ENCODE measurements at regions of chr5 and their contacts with region 1.

Region 1: DNA sequence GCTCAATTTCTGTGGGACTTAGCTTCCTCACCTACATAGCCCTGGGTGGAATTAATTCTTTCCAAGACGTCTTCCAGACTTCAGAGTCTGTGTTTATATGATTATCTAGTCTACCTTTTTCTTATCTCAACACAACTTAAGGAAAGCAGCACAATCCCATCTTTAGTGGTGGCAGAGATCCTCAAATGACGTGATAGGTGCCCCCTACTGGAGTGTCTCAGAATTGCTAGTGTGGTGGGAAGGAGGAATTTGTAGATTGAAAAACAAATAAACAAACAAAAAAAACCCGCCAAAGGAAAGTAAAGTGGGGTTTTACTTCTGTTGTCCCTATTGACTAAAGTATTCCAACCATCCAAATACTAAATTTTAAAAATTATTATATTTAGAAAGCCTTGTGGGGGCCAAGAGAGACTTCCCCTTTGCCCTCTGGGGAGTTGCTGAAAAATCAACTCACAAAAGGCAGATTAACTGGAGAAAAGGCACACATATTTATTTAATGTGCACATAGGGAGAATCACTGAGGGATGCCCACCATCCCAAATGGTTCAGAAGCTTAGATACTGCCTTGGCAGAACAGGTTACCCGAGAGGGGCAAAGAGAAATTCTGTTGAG is 283.3 kb downstream of the TMEM167A start:
- DNase-seq: peak; percentile 53
- H3K4me3 ChIP-seq: no peak overlapping the region
- H3K27ac ChIP-seq: no peak overlapping the region
- H3K4me1 ChIP-seq: no peaks in the 10 kb centered on the region
- H3K27me3 ChIP-seq: peaks cover 0 to 7% of the 10 kb centered on the region in 2 experiments
- CTCF ChIP-seq: peak; percentile 67 to 69
- POLR2A ChIP-seq: no peak

Region 2: GRCh38 chr5:82312373-82312856 is 481.5 kb before region 1 on chr5:
- CTCF ChIA-PET with region 1: interaction called, 3 read pairs
- POLR2A ChIA-PET with region 1: no interaction called
- dilution Hi-C with region 1: no loop called
- intact Hi-C with region 1: loop called (anchors 2 kb)
- DNase-seq: peak; percentile 63
- H3K4me3 ChIP-seq: no peak overlapping the region
- H3K27ac ChIP-seq: no peak overlapping the region
- H3K4me1 ChIP-seq: peaks cover 7% of the 10 kb centered on the region
- H3K27me3 ChIP-seq: peaks cover 3 to 4% of the 10 kb centered on the region in 2 experiments
- CTCF ChIP-seq: peak; percentile 77 to 90
- POLR2A ChIP-seq: no peak

Region 3: DNA sequence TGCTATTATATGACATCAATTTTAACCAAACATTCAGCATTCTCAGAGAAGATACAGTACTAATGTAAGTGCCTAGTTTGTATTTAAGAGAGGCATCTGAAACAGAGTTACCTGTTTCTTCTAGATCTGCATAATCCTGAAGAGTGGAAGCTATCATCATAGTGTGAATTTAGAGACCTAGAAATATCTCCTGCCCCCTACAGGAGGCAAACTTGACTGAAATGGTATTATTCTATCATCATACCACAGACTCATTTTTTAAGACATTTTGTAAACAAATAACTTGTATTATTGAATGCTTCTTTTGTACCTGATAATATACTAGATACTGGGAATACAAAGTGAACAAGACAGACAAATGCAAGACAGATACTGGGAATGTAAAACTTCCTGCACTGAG is 299.0 kb before region 1 on chr5:
- CTCF ChIA-PET with region 1: no interaction called
- POLR2A ChIA-PET with region 1: no interaction called
- dilution Hi-C with region 1: no loop called
- intact Hi-C with region 1: loop called (anchors 10 kb)
- DNase-seq: peak; percentile 30
- H3K4me3 ChIP-seq: no peak overlapping the region
- H3K27ac ChIP-seq: no peak overlapping the region
- H3K4me1 ChIP-seq: no peaks in the 10 kb centered on the region
- H3K27me3 ChIP-seq: peaks cover 0 to 2% of the 10 kb centered on the region in 2 experiments
- CTCF ChIP-seq: peak in 1 of 2 donors; percentile 6
- POLR2A ChIP-seq: no peak

Region 4: DNA sequence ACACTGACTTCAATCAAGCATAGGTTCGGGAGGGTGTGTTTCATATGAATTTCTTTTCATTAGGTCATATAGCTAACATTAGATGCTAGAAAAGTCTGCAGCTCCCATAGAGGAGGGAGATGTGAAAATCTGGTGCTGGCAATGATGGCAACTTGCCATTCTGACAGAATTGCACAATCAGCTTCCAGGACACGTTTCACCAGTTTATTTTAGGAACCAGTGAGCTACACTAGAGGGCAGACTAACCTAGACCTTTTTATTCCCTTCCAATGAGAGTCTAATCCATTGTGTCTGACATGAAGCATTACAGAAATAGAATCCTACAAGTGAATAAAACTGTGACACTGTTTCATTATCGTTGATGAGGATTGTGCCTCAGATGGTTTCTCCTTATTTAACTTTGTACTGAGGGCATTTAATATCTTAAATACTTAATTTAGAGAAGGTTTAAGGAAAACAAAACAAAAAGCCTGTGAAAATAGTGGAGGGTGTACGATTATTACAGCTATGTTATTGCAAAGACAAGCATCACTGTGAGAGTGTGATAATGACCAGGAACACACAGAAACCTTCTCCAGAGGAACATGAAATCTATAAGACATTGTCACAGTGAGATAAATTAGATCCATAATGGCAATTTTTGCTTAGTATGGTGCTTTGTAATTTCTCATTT is 152.4 kb before region 1 on chr5:
- CTCF ChIA-PET with region 1: interaction called, 6 read pairs
- POLR2A ChIA-PET with region 1: no interaction called
- dilution Hi-C with region 1: no loop called
- intact Hi-C with region 1: loop called (anchors 1 kb)
- DNase-seq: peak; percentile 81
- H3K4me3 ChIP-seq: no peak overlapping the region
- H3K27ac ChIP-seq: no peak overlapping the region
- H3K4me1 ChIP-seq: no peaks in the 10 kb centered on the region
- H3K27me3 ChIP-seq: peaks cover 2% of the 10 kb centered on the region in 2 experiments
- CTCF ChIP-seq: peak; percentile 39 to 56
- POLR2A ChIP-seq: no peak

Region 5: DNA sequence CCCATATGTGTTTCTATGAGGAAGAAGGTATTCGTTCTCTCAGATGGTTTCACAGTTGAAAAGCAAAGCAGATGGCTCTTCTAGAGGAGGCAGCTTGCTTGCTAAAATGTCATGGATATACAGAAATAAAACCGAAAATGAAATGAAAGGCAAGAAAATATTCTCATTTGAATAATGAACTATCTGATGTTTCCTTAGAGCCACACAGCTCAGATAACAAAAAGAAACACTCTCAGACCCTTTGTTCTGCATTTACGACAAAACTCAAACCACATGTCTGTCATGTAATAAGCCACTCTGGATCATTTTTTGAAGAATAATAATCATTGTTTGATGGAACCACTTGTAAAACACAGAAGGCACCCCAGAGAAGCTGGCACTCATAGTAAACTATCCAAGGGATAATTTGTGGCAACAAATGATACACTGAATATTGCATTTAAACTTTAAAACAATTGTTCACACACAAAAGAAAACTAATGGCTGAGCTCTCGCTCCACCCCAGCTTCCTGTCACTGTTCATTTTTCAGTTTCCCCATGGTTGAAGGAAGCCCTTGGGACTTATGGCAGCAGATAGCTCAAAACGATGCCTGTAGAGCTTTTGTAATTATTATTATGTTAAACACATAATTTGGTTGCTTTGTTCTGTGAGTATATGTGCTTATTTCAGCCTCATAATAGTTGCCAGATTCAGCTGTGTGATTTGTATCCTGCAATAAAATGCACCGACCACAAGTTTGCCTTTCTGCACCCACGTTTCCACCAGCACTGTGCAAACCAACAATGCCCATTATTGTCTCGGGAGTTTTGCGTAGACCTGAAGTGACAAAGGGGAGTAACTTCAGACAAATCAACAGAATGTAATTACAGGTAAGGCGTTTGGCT is 27.3 kb after region 1 on chr5:
- CTCF ChIA-PET with region 1: no interaction called
- POLR2A ChIA-PET with region 1: no interaction called
- dilution Hi-C with region 1: no loop called
- intact Hi-C with region 1: no loop called
- DNase-seq: no peak
- H3K4me3 ChIP-seq: no peak overlapping the region
- H3K27ac ChIP-seq: no peak overlapping the region
- H3K4me1 ChIP-seq: no peaks in the 10 kb centered on the region
- H3K27me3 ChIP-seq: no peaks in the 10 kb centered on the region
- CTCF ChIP-seq: no peak
- POLR2A ChIP-seq: no peak

Region 6: DNA sequence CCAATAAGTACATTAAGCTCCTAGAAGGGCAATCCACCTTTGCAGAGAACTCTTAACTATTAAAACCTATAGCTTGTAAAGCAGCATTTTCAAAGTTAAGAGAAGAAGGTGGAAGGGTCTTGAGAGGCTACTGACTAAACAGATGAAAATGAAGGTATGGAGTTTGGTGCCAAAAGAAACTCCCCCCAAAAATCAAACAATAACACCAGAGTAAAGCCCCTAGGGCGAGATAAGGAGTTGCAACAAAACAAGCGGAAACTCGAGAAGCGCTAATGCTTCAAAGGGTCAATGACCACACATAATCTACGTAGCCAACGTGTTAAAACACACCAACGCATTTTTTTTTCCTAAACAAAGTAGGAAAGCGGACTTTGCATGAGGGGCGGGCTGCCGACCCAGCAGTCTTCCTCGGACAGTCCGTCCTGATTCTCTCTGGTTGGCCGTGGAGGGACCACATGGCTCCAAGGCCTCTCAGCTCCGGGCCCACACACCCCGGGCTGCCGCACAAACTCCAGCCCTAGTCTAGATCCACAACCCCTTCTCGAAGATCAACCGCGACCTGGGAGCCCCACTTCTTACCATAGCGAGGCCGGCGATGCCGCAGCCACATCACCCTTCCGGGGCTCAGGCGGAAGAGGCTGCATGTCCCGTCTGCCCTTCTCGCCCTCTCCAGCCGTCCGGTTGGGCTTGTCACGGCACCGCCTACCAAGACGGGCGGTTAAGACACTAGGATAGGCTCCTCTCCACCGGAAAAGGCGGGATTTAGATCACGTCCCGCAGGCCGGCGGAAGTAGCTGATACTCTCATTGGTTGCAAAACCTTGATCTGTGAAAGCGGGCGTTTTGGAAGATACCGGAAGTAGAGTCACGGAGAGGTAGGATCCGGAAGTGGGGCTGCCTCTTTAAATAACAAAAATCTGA is 283.1 kb after region 1 on chr5 and contains the starts of genes TMEM167A and XRCC4:
- CTCF ChIA-PET with region 1: no interaction called
- POLR2A ChIA-PET with region 1: no interaction called
- dilution Hi-C with region 1: no loop called
- intact Hi-C with region 1: loop called (anchors 5 kb)
- DNase-seq: peak; percentile 97
- H3K4me3 ChIP-seq: peak within 1 kb of the TSS; percentile 69 to 98 (median 93)
- H3K27ac ChIP-seq: peak within 1 kb of the TSS; percentile 85
- H3K4me1 ChIP-seq: peaks cover 14% of the 10 kb centered on the region
- H3K27me3 ChIP-seq: no peaks in the 10 kb centered on the region
- CTCF ChIP-seq: no peak
- POLR2A ChIP-seq: peak; percentile 77
- total RNA-seq, gene TMEM167A: 64.4 and 69.4 TPM in 2 replicates
- total RNA-seq, gene XRCC4: 7.6 and 7.7 TPM in 2 replicates

Measured in endothelial cell of umbilical vein (primary cell).